Left lung (tissue), 14 donors: ENCODE measurements at regions of chr19 and their contacts with region 1.

Region 1: GRCh38 chr19:44841231-44841630 is 4.9 kb upstream of the NECTIN2 start:
- DNase-seq: peak in 2 of 4 donors; percentile 65 to 84
- ATAC-seq: peak; percentile 6
- H3K4me3 ChIP-seq: no peak overlapping the region
- H3K27ac ChIP-seq: peak overlapping the region in 1 of 2 donors; percentile 65
- H3K4me1 ChIP-seq: peaks cover 5 to 16% of the 10 kb centered on the region in 2 donors
- H3K27me3 ChIP-seq: no peaks in the 10 kb centered on the region
- CTCF ChIP-seq: no peak

Region 2: GRCh38 chr19:44782729-44783128 is 58.5 kb before region 1 on chr19:
- intact Hi-C with region 1: no loop called
- DNase-seq: no peak
- ATAC-seq: no peak
- H3K4me3 ChIP-seq: no peak overlapping the region
- H3K27ac ChIP-seq: no peak overlapping the region
- H3K4me1 ChIP-seq: peaks cover 2 to 13% of the 10 kb centered on the region in 2 donors
- H3K27me3 ChIP-seq: peaks cover 0 to 5% of the 10 kb centered on the region in 2 donors
- CTCF ChIP-seq: no peak

Region 3: GRCh38 chr19:44800461-44800860 is 40.8 kb before region 1 on chr19:
- intact Hi-C with region 1: loop called in 1 of 2 experiments (anchors 5 kb)
- DNase-seq: peak; percentile 74 to 96 (median 86)
- ATAC-seq: peak; percentile 99
- H3K4me3 ChIP-seq: no peak overlapping the region
- H3K27ac ChIP-seq: no peak overlapping the region
- H3K4me1 ChIP-seq: peaks cover 0 to 14% of the 10 kb centered on the region in 2 donors
- H3K27me3 ChIP-seq: no peaks in the 10 kb centered on the region
- CTCF ChIP-seq: peak; percentile 91 to 93

Region 4: GRCh38 chr19:44905437-44906160 is 64.4 kb after region 1 on chr19 and contains the start of gene APOE:
- intact Hi-C with region 1: no loop called
- DNase-seq: peak in 2 of 4 donors; percentile 26 to 62
- ATAC-seq: peak; percentile 51
- H3K4me3 ChIP-seq: peak within 1 kb of the TSS; percentile 17 to 33
- H3K27ac ChIP-seq: peak within 1 kb of the TSS in 1 of 2 donors; percentile 13
- H3K4me1 ChIP-seq: peaks cover 0 to 20% of the 10 kb centered on the region in 2 donors
- H3K27me3 ChIP-seq: peaks cover 4 to 28% of the 10 kb centered on the region in 2 donors
- CTCF ChIP-seq: no peak
- polyA plus RNA-seq, gene APOE: 22.6 to 45.1 (median 32.6) TPM

Region 5: DNA sequence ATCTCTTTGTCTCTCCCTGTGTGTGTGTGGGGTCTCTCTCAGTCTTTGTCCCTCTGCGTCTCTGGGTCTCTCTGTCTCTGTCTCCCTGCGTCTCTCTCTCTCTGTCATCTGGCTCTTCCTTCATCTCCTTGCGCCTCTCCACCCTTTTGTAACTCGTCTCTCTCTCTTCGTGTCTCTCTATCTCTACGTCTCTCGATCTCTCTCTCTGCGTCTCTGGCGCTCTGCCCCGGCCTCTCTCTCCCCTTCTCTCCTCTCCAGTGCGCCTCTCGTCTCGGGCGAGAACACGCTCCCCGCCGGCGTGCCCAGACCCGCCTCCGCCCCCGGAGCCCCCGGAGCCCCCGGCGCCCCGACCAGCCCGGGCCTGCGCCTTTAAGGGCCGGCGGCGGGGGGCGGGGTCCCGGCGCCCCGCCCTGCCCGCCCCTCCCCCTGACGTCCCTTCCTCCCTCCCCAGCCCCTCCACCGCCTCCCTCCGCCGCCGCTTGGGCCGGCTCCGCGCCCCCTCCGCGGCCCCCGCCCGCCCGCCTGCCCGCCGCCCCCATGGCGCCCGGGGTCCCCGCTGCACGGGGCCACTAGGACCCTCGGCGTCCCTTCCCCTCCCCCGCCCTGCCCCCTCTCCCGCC is 409.7 kb after region 1 on chr19 and contains the start of gene MARK4:
- intact Hi-C with region 1: no loop called
- DNase-seq: peak; percentile 36 to 89 (median 58)
- ATAC-seq: peak; percentile 73
- H3K4me3 ChIP-seq: peak within 1 kb of the TSS; percentile 64 to 83
- H3K27ac ChIP-seq: peak within 1 kb of the TSS; percentile 33 to 58
- H3K4me1 ChIP-seq: peaks cover 16 to 43% of the 10 kb centered on the region in 2 donors
- H3K27me3 ChIP-seq: no peaks in the 10 kb centered on the region
- CTCF ChIP-seq: no peak
- polyA plus RNA-seq, gene MARK4: 35.6 to 46.4 (median 38.9) TPM